HCT116 (cell line): ENCODE measurements at regions of chr1 and their contacts with region 1.

Region 1: GRCh38 chr1:115275212-115275611 is 62.8 kb downstream of the NGF start:
- DNase-seq: peak; percentile 7
- ATAC-seq: peak; percentile 54; the same call in 1 of the 2 replicates
- H3K4me3 ChIP-seq: no peak overlapping the region
- H3K27ac ChIP-seq: no peak overlapping the region
- H3K4me1 ChIP-seq: no peaks in the 10 kb centered on the region
- H3K27me3 ChIP-seq: no peaks in the 10 kb centered on the region
- CTCF ChIP-seq: peak; percentile 17 to 67 (median 64); a peak in 4 of 6 replicates
- POLR2A ChIP-seq: no peak
- RAD21 ChIP-seq: peak; percentile 45

Region 2: GRCh38 chr1:115463363-115463746 is 188.1 kb after region 1 on chr1:
- CTCF ChIA-PET with region 1: interaction called, 10 read pairs
- POLR2A ChIA-PET with region 1: no interaction called
- RAD21 ChIA-PET with region 1: no interaction called
- intact Hi-C with region 1: loop called (anchors 10 kb)
- DNase-seq: no peak
- ATAC-seq: peak; percentile 66
- H3K4me3 ChIP-seq: no peak overlapping the region
- H3K27ac ChIP-seq: no peak overlapping the region
- H3K4me1 ChIP-seq: no peaks in the 10 kb centered on the region
- H3K27me3 ChIP-seq: no peaks in the 10 kb centered on the region
- CTCF ChIP-seq: peak; percentile 20 to 44 (median 31); a peak in 4 of 6 replicates
- POLR2A ChIP-seq: no peak
- RAD21 ChIP-seq: peak; percentile 77